ENCODE measurements at regions of chr20 and their contacts with region 1.

Region 1: GRCh38 chr20:44210422-44211176 is at the start of gene OSER1:
- DNase-seq: peak; percentile 97
- H3K4me3 ChIP-seq: peak within 1 kb of the TSS; percentile 90
- H3K27ac ChIP-seq: peak within 1 kb of the TSS; percentile 81
- H3K4me1 ChIP-seq: peaks cover 24% of the 10 kb centered on the region
- CTCF ChIP-seq: no peak
- total RNA-seq, gene OSER1: 24.5 and 28.1 TPM in 2 replicates

Region 2: GRCh38 chr20:44861531-44862006 is 651.0 kb after region 1 on chr20:
- CTCF ChIA-PET with region 1: no interaction called
- POLR2A ChIA-PET with region 1: no interaction called
- intact Hi-C with region 1: loop called (anchors 10 kb)
- DNase-seq: no peak
- H3K4me3 ChIP-seq: no peak overlapping the region
- H3K27ac ChIP-seq: no peak overlapping the region
- H3K4me1 ChIP-seq: peaks cover 5% of the 10 kb centered on the region
- CTCF ChIP-seq: no peak